Colonic mucosa (tissue), 4 donors: ENCODE measurements at regions of chr7 and their contacts with region 1.

Region 1: DNA sequence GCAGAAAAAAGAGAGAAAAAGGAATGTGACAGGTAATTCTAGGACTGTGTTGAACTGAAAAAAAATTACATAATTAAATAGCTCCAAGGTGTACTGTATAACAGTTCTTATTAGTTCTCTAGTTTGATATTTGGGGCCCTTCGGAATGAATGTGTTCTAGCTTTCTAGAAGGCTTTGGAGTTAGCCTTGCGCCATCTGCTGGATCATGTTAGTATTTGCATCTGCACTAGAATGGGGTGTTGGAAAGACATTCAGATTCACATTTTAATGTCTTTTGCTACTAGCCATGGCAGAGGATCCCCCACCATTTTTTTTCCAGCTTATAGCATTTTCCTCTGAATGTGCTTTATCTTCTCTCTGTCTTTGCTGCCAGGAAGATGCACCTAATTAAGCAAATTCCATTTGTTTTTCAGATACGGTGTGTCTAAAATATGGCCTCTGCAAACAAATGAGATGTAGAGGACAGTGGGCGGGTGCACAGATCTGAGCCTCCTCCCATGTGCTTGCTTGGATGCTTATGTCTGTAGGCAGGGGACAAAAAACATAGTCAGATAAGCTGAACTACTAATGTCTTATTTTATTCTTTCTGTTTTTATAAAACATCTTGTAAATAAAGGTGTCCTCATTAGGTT is 238.5 kb downstream of the PHF14 start:
- DNase-seq: peak; percentile 60
- H3K4me3 ChIP-seq: no peak overlapping the region
- H3K27ac ChIP-seq: no peak overlapping the region
- H3K4me1 ChIP-seq: no peaks in the 10 kb centered on the region
- H3K27me3 ChIP-seq: no peaks in the 10 kb centered on the region
- CTCF ChIP-seq: peak; percentile 64

Region 2: GRCh38 chr7:10308276-10308675 is 903.9 kb before region 1 on chr7:
- intact Hi-C with region 1: no loop called
- DNase-seq: no peak
- H3K4me3 ChIP-seq: no peak overlapping the region
- H3K27ac ChIP-seq: no peak overlapping the region
- H3K4me1 ChIP-seq: no peaks in the 10 kb centered on the region
- H3K27me3 ChIP-seq: no peaks in the 10 kb centered on the region
- CTCF ChIP-seq: no peak

Region 3: DNA sequence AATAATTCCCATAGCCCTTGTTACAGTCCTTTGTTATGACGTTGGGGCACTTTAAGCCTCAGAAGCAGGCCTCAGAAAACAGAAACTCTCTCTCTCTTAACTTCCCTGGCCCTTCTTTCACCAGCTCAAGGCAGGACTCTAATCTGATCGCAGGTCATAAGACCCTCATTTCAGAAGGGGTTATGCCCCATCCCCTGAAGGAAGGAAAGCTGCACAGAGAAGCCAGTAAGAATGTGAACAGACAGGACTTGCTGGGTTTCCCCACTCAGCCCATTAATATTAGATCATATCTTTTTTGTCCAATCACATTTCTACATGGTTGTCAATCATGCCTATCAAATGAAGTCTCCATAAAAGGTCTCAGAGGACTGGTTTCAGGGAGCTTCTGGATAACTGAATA is 287.8 kb before region 1 on chr7:
- intact Hi-C with region 1: loop called (anchors 10 kb)
- DNase-seq: no peak
- H3K4me3 ChIP-seq: no peak overlapping the region
- H3K27ac ChIP-seq: no peak overlapping the region
- H3K4me1 ChIP-seq: no peaks in the 10 kb centered on the region
- H3K27me3 ChIP-seq: no peaks in the 10 kb centered on the region
- CTCF ChIP-seq: no peak

Region 4: GRCh38 chr7:11153694-11154093 is 58.5 kb before region 1 on chr7:
- intact Hi-C with region 1: no loop called
- DNase-seq: no peak
- H3K4me3 ChIP-seq: no peak overlapping the region
- H3K27ac ChIP-seq: no peak overlapping the region
- H3K4me1 ChIP-seq: no peaks in the 10 kb centered on the region
- H3K27me3 ChIP-seq: no peaks in the 10 kb centered on the region
- CTCF ChIP-seq: no peak

Region 5: DNA sequence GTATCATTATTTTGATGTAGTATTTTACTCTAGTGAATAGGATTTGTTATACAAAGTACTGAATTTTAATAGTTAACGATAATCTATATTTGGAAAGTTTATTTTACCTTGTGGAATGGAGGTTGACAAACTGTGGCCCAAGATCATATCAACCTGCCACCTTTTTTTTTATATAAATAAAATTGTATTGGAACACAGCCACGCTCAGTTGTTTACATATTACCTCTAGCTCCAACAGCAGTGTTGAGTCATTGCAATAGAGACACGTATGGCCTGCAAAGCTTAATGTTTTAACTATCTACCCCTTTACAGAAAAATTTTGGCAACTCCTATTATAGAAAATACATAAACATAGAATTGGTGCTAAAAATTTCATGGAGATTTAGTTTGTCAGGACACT is 380.5 kb after region 1 on chr7:
- intact Hi-C with region 1: no loop called
- DNase-seq: no peak
- H3K4me3 ChIP-seq: no peak overlapping the region
- H3K27ac ChIP-seq: no peak overlapping the region
- H3K4me1 ChIP-seq: no peaks in the 10 kb centered on the region
- H3K27me3 ChIP-seq: no peaks in the 10 kb centered on the region
- CTCF ChIP-seq: no peak

Region 6: DNA sequence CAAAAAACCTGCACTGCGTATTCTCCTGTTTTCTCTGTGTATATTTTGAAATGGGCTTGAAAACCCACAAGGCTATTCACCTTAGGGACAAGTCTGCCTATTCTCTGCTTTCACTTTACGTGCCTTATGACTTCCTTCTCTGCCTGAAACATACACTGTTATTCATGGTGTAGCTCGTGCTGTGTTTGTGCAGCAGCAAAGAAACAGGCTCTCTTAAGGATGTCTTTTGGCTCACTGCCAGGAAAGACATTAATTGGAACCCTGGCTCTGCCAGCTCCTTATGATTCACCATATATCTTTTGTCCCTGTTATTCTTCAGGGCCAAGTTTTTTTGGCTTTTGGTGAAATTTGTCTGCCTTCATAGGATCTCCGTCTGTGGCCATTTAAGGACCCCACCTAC is 1091.3 kb after region 1 on chr7:
- intact Hi-C with region 1: no loop called
- DNase-seq: no peak
- H3K4me3 ChIP-seq: no peak overlapping the region
- H3K27ac ChIP-seq: no peak overlapping the region
- H3K4me1 ChIP-seq: no peaks in the 10 kb centered on the region
- H3K27me3 ChIP-seq: no peaks in the 10 kb centered on the region
- CTCF ChIP-seq: no peak